B cell (primary cell): ENCODE measurements at regions of chr20 and their contacts with region 1.

Region 1: GRCh38 chr20:15794409-15794808 is 778.8 kb downstream of the KIF16B start:
- DNase-seq: no peak
- ATAC-seq: no peak
- H3K4me3 ChIP-seq: no peak overlapping the region
- H3K4me3 Mint-ChIP-seq: no peak overlapping the region
- H3K27ac ChIP-seq: no peak overlapping the region
- H3K27ac Mint-ChIP-seq: no peak overlapping the region
- H3K4me1 ChIP-seq: no peaks in the 10 kb centered on the region
- H3K4me1 Mint-ChIP-seq: peaks cover 4% of the 10 kb centered on the region
- H3K27me3 ChIP-seq: no peaks in the 10 kb centered on the region
- H3K27me3 Mint-ChIP-seq: no peaks in the 10 kb centered on the region
- CTCF ChIP-seq: no peak

Region 2: GRCh38 chr20:15708984-15709598 is 85.3 kb before region 1 on chr20:
- CTCF ChIA-PET with region 1: no interaction called
- POLR2A ChIA-PET with region 1: no interaction called
- intact Hi-C with region 1: no loop called
- DNase-seq: peak; percentile 67
- ATAC-seq: peak; percentile 47
- H3K4me3 ChIP-seq: no peak overlapping the region
- H3K4me3 Mint-ChIP-seq: no peak overlapping the region
- H3K27ac ChIP-seq: no peak overlapping the region
- H3K27ac Mint-ChIP-seq: no peak overlapping the region
- H3K4me1 ChIP-seq: no peaks in the 10 kb centered on the region
- H3K4me1 Mint-ChIP-seq: peaks cover 4% of the 10 kb centered on the region
- H3K27me3 ChIP-seq: no peaks in the 10 kb centered on the region
- H3K27me3 Mint-ChIP-seq: no peaks in the 10 kb centered on the region
- CTCF ChIP-seq: peak; percentile 81

Region 3: DNA sequence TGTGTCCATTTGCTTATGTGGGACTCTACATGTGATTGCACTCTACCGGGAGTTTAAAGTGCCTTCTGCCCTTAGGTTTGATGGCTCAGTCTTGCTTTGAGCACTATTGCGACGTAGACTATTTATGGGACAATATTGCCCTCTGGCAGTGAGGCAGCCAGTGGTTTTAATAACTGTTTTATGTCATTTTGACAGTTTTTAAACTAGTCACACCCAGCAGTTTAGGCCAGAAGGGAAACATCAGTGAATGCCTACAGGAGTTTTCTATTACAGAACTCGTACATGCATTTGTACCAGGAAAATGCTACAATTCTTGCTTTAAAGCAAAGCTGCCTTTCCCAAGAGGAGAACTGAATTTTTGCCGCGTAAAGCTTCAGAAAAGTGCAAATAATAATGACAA is 34.8 kb before region 1 on chr20:
- CTCF ChIA-PET with region 1: no interaction called
- POLR2A ChIA-PET with region 1: no interaction called
- intact Hi-C with region 1: loop called (anchors 5 kb)
- DNase-seq: no peak
- ATAC-seq: no peak
- H3K4me3 ChIP-seq: no peak overlapping the region
- H3K4me3 Mint-ChIP-seq: no peak overlapping the region
- H3K27ac ChIP-seq: no peak overlapping the region
- H3K27ac Mint-ChIP-seq: no peak overlapping the region
- H3K4me1 ChIP-seq: peaks cover 16 to 18% of the 10 kb centered on the region in 2 donors
- H3K4me1 Mint-ChIP-seq: peaks cover 23% of the 10 kb centered on the region
- H3K27me3 ChIP-seq: no peaks in the 10 kb centered on the region
- H3K27me3 Mint-ChIP-seq: no peaks in the 10 kb centered on the region
- CTCF ChIP-seq: no peak